Activated CD4-positive, alpha-beta T cell treated with anti-CD3 and anti-CD28 coated beads for 36 hours (primary cell): ENCODE measurements at regions of chr16 and their contacts with region 1.

Region 1: DNA sequence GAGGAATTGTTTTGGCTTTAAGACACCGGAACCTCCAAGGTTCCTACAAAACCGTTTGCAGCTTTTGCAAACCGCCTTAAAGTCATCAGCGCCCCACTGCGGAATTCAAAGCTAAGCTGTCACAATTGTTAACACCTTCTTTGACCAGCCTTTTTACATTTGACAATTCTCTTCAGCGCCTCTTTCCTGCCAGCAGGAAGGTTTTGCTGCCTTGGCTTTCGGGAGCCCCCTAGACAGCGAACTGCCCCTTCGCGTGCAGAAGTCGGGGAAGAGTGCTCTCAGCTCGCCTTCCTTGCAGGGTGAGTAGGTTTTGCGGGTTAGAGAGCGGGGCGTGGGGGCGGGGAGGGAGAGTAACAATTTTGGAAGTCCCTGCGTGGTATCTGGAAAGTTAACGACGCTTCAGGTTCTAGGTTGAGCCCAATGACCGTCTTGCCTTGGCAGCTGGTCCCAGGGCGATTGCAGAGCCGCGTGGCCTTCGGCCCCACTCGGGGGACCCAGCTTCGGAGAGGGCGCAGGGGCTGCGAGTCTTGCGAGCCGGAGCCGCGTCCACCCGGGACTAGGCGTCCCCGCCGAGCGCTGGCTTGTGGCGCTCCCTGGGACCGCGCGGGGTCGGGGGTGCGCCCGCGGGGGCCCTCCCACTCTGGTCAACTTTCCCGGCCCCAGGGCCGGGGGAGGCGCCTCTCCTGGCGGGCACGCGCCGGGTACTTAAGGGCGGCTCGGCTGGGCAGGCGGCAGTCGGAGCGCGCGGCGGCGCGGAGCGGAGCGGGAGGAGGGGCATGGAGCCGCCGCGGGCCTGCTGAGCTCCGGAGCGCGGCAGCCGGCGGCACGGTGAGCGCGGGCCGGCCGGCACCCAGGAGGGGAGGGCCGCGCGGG is at the start of gene HAS3:
- DNase-seq: peak; percentile 67
- ATAC-seq: peak; percentile 82
- H3K4me3 Mint-ChIP-seq: peak within 1 kb of the TSS; percentile 72
- H3K27ac Mint-ChIP-seq: peak within 1 kb of the TSS; percentile 76
- H3K4me1 Mint-ChIP-seq: peaks cover 16% of the 10 kb centered on the region
- H3K27me3 Mint-ChIP-seq: peaks cover 24% of the 10 kb centered on the region
- total RNA-seq, gene HAS3: 0.39 to 0.42 TPM

Region 2: DNA sequence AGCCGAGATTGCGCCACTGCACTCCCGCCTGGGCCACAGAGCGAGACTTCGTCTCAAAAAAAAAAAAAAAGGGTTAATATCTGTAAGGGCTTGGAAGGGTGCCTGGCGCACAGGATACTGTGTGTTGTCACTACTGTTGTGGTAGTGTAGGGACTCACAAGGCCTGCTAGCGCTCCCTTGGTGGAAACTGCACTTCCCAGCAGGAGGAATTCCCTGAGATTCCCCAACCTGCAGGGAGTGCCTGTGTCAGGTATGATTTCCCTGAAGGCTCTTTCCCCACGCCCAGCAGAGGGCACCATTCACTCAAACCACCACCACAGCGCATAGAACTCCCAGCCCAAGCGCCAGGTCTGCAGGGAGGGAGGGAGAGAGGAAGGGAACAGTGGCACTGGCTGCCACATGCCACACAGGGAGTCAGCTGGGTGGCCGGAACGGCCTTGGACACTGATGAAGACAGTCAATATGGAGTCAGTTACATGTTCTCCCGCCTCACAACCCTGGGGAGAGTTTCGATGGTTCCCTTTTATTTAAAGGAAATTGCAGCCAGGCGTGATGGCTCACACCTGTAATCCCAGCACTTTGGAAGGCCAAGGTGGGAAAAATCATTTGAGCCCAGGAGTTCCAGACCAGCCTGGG is 401.4 kb before region 1 on chr16:
- CTCF ChIA-PET with region 1: no interaction called
- POLR2A ChIA-PET with region 1: no interaction called
- intact Hi-C with region 1: loop called in 1 of 2 experiments (anchors 10 kb)
- DNase-seq: peak; percentile 83
- ATAC-seq: peak; percentile 91
- H3K4me3 Mint-ChIP-seq: no peak overlapping the region
- H3K27ac Mint-ChIP-seq: peak overlapping the region; percentile 39
- H3K4me1 Mint-ChIP-seq: peaks cover 5% of the 10 kb centered on the region
- H3K27me3 Mint-ChIP-seq: peaks cover 3% of the 10 kb centered on the region

Region 3: DNA sequence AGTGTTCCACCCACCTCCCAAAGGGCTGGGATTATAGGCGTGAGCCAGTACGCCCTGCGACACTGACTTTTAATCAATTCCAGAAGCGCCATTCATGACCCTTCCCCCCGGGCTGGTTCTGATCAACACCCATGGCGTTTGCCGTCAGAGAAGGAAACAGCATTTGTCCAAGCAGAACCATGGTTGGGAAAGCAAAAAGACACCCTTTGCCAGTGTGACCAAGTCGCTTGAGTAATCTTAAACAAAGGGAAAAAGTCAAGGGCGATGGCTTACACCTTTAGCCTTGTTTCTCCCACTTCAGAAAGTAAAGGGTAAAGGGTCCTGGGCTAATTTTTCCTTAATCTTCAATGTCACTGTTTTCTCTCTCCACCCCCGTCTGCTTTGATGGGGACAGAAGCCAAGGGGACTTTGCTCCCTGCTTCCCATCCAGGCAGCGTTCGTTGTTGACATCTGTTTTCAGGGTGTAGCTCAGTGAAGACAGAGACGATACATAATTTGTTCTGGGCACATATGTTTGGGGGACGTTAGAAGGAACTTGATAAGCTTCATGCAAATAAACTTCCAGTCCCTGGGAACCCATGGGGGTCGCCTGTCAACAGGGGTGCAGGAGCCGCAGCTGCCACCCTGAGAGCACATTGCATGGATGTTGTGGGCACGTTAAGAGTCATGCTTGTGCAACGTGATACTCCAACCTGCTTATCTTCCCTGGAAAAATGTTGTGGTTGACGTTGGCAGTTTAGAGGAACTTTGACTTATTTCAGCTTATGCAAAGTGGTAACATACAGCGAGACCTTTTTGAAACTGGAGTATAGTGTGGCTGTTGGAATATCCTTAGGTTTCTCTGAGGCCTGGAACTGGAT is 313.0 kb before region 1 on chr16:
- CTCF ChIA-PET with region 1: no interaction called
- POLR2A ChIA-PET with region 1: no interaction called
- intact Hi-C with region 1: no loop called
- DNase-seq: no peak
- ATAC-seq: no peak
- H3K4me3 Mint-ChIP-seq: no peak overlapping the region
- H3K27ac Mint-ChIP-seq: no peak overlapping the region
- H3K4me1 Mint-ChIP-seq: no peaks in the 10 kb centered on the region
- H3K27me3 Mint-ChIP-seq: peaks cover 7% of the 10 kb centered on the region

Region 4: DNA sequence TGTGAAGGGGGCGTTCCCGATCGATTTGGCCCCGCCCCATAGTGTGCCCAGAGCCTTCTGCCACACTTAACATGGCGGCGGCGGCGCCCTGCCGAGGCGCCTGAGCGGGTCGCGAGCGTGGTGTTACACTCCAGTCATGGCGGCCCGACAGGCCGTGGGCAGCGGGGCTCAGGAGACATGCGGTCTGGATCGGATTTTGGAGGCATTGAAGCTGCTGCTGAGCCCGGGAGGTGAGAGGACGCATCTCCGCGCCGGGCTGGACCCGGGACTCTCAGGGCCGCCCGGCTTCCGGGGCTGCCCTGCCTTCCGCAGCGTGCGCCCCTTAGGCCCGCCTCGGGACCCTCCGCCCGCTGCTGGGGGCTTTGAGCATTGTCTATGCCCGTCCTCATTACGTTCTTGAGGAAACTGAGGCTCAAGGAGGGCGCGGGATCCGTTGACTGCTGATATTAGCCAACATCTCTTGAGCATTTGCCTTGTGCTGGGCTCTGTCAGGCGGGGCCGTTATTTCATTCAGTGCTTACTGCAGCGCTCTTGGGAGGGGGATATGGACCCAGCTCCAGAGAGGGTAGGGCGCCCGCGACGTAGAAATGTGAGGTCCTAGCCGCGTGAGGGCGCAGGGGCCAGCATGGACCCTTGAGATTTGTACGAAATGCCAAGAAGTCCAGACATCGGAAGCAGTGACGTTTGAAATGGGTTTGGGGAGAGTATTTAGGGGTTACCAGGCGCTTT is 262.1 kb before region 1 on chr16 and contains the start of gene TANGO6:
- CTCF ChIA-PET with region 1: interaction called, 5 read pairs
- POLR2A ChIA-PET with region 1: no interaction called
- intact Hi-C with region 1: loop called (anchors 1 to 5 kb)
- DNase-seq: peak; percentile 95
- ATAC-seq: peak; percentile 93
- H3K4me3 Mint-ChIP-seq: peak within 1 kb of the TSS; percentile 84
- H3K27ac Mint-ChIP-seq: peak within 1 kb of the TSS; percentile 91
- H3K4me1 Mint-ChIP-seq: peaks cover 27% of the 10 kb centered on the region
- H3K27me3 Mint-ChIP-seq: no peaks in the 10 kb centered on the region
- total RNA-seq, gene TANGO6: 29.7 to 31.2 TPM

Region 5: DNA sequence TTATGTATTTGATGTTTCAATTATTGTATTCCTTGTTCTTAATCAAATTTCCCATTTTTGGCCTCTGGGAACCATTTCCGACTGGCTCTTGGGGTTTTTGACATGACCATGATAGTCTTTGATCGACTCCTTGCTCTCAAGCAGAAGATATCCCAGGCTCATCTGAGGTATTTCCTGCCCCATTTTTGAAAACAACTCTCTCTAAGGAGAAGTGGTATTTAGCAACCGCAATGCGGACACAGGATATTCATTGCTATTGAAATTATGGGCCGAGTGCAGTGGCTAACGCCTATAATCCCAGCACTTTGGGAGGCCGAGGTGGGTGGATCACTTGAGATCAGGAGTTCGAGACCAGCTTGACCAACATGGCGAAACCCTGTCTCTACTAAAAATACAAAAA is 256.9 kb before region 1 on chr16:
- CTCF ChIA-PET with region 1: interaction called, 5 read pairs
- POLR2A ChIA-PET with region 1: no interaction called
- intact Hi-C with region 1: loop called (anchors 1 to 5 kb)
- DNase-seq: no peak
- ATAC-seq: no peak
- H3K4me3 Mint-ChIP-seq: no peak overlapping the region
- H3K27ac Mint-ChIP-seq: no peak overlapping the region
- H3K4me1 Mint-ChIP-seq: peaks cover 26% of the 10 kb centered on the region
- H3K27me3 Mint-ChIP-seq: no peaks in the 10 kb centered on the region

Region 6: DNA sequence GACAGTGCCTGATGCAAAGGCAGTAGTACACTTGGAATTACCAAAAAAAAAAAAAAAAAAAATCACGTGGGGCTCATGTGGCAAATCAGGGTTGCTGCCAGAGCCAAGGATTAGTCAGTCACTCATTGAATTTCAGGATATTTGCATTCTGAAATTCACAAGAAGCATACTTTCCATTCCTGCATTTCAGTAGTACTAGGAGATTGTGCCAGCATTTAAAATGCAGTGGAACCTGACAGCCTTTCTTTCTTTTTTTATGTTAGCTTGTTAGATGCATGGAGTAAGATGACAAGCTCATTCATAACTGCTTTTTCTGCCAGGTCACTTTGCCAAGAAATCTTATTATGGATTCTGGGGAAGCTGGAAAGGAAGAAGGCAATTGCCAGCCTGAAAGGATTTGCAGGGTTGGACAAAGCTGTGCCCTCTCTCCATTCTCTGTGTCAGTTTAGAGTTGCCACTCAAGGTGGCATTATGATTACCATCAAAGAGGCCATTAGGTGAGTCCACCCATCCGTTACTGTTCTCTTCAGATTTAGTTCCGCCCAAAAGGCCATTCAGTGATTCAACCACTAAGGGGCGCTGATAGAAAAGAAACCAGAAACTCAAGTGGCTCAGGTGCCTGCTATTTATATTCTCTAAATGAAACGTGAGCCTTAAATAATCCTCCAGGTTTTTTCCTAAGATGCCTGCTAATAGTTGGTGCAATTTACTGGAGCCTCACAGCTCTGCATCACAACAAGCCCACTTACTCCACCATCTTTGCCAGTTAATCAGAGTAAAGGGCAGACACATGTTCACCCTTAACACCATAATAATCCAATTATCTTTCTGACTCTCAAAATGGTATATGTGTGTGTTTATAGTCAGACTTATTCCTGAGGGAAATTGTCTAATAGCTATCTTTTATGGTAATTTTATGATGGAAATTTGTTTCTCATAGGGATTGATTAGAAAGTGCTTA is 203.4 kb before region 1 on chr16:
- CTCF ChIA-PET with region 1: no interaction called
- POLR2A ChIA-PET with region 1: no interaction called
- intact Hi-C with region 1: loop called in 1 of 2 experiments (anchors 5 kb)
- DNase-seq: peak; percentile 30
- ATAC-seq: no peak
- H3K4me3 Mint-ChIP-seq: no peak overlapping the region
- H3K27ac Mint-ChIP-seq: no peak overlapping the region
- H3K4me1 Mint-ChIP-seq: no peaks in the 10 kb centered on the region
- H3K27me3 Mint-ChIP-seq: no peaks in the 10 kb centered on the region

Region 7: GRCh38 chr16:69123910-69124309 is 18.2 kb after region 1 on chr16:
- CTCF ChIA-PET with region 1: interaction called, 59 read pairs
- POLR2A ChIA-PET with region 1: interaction called, 3 read pairs
- intact Hi-C with region 1: no loop called
- DNase-seq: peak; percentile 79
- ATAC-seq: peak; percentile 51
- H3K4me3 Mint-ChIP-seq: no peak overlapping the region
- H3K27ac Mint-ChIP-seq: no peak overlapping the region
- H3K4me1 Mint-ChIP-seq: peaks cover 20% of the 10 kb centered on the region
- H3K27me3 Mint-ChIP-seq: no peaks in the 10 kb centered on the region